GM12878 (cell line): ENCODE measurements at regions of chr3 and their contacts with region 1.

Region 1: DNA sequence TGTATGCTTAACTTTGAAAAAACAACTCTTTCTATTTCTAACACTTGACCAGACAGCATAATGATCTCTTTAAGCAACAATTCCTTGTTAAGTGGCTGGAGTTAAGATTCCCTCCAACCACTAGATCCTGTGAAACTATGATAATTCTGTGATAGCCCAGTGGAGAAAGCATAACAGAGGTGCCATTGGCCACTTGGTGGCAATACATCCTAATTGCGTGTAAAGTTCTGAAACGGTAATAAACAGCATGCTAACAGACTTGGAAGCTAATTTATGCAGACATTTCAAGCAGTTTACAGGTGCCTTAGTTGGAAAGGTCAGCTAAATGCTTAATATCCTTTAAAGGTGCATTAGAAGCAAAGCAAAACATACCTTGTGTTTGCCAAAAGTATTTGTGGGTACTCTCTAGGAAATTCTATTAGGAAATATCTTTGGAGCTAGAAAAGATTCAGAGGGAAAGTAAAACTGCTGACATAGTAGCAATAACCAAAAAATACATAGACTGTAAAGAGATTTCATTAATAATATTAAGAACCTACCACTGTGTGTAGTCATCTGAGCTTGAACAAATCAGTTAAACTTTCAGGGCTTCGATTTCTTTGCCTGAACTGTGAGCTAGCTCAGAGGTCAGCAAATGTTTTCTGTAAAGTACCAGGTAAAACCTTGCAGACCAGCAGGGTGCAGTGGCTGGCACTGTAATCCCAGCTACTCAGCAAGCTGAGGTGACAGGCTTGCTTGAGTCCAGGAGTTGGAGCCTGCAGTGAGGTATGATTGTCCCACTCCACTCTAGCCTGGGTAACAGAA is 19.0 kb upstream of the CSTA start:
- DNase-seq: no peak
- ATAC-seq: peak; percentile 93
- H3K4me3 ChIP-seq: no peak overlapping the region
- H3K27ac ChIP-seq: no peak overlapping the region
- H3K4me1 ChIP-seq: peaks cover 30% of the 10 kb centered on the region
- H3K27me3 ChIP-seq: no peaks in the 10 kb centered on the region
- CTCF ChIP-seq: peak; percentile 30 to 57 (median 35); a peak in 4 of 6 replicates
- EP300 ChIP-seq: no peak
- POLR2A ChIP-seq: no peak
- RAD21 ChIP-seq: peak; percentile 62

Region 2: DNA sequence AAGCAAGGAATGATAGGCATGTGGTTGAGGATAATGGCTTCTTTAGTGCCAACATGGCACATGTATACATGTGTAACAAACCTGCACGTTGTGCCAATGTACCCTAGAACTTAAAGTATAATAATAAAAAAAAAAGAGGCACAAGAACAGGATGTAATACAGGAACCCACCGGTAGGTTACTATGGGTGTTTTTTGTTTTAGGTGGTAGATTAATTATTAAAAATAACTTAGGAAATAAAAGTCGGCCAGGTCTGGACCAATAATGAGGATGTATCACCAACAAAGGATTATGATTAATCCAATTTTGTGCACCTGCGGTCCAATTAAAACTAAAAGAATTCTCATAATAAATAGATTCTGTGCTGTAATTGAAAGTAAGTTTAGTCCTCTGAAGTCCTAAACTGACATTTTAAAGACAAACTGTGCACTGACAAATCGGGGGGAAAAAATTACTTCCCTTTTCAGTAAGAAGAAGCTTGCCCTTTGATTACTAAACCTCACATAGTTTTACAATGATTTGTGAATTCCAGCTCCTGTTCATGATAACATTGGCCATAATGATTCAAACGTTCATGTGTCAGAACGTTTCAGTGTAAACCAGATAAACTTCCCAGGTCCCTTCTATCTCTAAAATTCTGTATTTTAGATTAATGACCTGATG is 60.4 kb before region 1 on chr3:
- CTCF ChIA-PET with region 1: interaction called, 4 read pairs
- POLR2A ChIA-PET with region 1: interaction called, 3 read pairs
- RAD21 ChIA-PET with region 1: no interaction called
- SMC1A ChIA-PET with region 1: interaction called, 19 read pairs
- in situ Hi-C with region 1: no loop called
- intact Hi-C with region 1: no loop called
- DNase-seq: no peak
- ATAC-seq: peak; percentile 51
- H3K4me3 ChIP-seq: peak overlapping the region; percentile 66
- H3K27ac ChIP-seq: peak overlapping the region; percentile 63
- H3K4me1 ChIP-seq: peaks cover 14% of the 10 kb centered on the region
- H3K27me3 ChIP-seq: no peaks in the 10 kb centered on the region
- CTCF ChIP-seq: peak in 2 of 3 experiments; percentile 23 to 28; a peak in 2 of 6 replicates
- EP300 ChIP-seq: no peak
- POLR2A ChIP-seq: no peak
- RAD21 ChIP-seq: no peak

Region 3: GRCh38 chr3:122283796-122284445 is 22.1 kb before region 1 on chr3:
- CTCF ChIA-PET with region 1: interaction called, 15 read pairs
- POLR2A ChIA-PET with region 1: interaction called, 4 read pairs
- RAD21 ChIA-PET with region 1: no interaction called
- SMC1A ChIA-PET with region 1: interaction called, 5 read pairs
- in situ Hi-C with region 1: no loop called
- intact Hi-C with region 1: no loop called
- DNase-seq: no peak
- ATAC-seq: no peak
- H3K4me3 ChIP-seq: no peak overlapping the region
- H3K27ac ChIP-seq: no peak overlapping the region
- H3K4me1 ChIP-seq: no peaks in the 10 kb centered on the region; the same call in 1 of the 2 replicates
- H3K27me3 ChIP-seq: no peaks in the 10 kb centered on the region
- CTCF ChIP-seq: no peak
- EP300 ChIP-seq: no peak
- POLR2A ChIP-seq: no peak
- RAD21 ChIP-seq: no peak

Region 4: DNA sequence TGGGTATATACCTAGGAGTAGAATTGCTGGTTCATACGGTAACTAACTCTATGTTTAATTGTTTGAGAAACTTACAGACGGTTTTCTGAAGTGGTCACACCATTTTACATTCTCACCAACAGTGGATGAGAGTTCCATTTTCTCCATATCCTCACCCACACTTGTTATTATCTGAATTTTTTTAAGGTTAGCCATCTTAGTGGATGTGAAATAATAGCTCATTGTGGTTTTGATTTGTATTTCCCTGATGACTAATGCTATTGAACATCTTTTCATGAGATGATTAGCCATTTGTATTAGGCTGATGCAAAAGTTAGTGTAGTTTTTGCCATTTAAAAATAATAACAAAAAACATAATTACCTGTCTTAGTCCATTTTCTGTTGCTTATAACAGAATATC is 37.6 kb after region 1 on chr3:
- CTCF ChIA-PET with region 1: interaction called, 38 read pairs
- POLR2A ChIA-PET with region 1: interaction called, 5 read pairs
- RAD21 ChIA-PET with region 1: interaction called, 14 read pairs
- SMC1A ChIA-PET with region 1: interaction called, 18 read pairs
- in situ Hi-C with region 1: no loop called
- intact Hi-C with region 1: no loop called
- DNase-seq: no peak
- ATAC-seq: no peak
- H3K4me3 ChIP-seq: no peak overlapping the region
- H3K27ac ChIP-seq: no peak overlapping the region
- H3K4me1 ChIP-seq: no peaks in the 10 kb centered on the region
- H3K27me3 ChIP-seq: no peaks in the 10 kb centered on the region
- CTCF ChIP-seq: no peak
- EP300 ChIP-seq: no peak
- POLR2A ChIP-seq: no peak
- RAD21 ChIP-seq: no peak

Region 5: DNA sequence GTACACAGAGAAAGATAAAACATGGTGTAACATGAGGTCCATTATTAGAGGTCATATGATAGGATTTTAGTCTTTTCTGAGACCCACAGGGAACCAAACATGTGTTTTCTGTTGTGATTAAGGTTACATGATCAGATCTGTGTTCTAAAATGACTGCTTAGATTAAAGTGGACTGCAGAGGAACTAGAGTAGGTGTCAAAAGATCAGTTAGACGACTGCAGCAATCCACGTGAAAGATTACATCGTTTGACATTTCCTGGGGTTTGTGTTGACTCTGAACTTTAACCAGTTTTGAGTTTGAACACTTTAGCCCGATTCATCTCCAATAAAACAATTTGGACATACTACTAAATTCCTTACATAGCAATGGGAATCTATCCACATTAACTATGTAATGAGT is 72.0 kb after region 1 on chr3:
- CTCF ChIA-PET with region 1: interaction called, 24 read pairs
- POLR2A ChIA-PET with region 1: interaction called, 14 read pairs
- RAD21 ChIA-PET with region 1: interaction called, 56 read pairs
- SMC1A ChIA-PET with region 1: interaction called, 59 read pairs
- in situ Hi-C with region 1: no loop called
- intact Hi-C with region 1: loop called (anchors 5 kb)
- DNase-seq: no peak
- ATAC-seq: no peak
- H3K4me3 ChIP-seq: no peak overlapping the region
- H3K27ac ChIP-seq: no peak overlapping the region
- H3K4me1 ChIP-seq: peaks cover 11% of the 10 kb centered on the region
- H3K27me3 ChIP-seq: no peaks in the 10 kb centered on the region
- CTCF ChIP-seq: no peak
- EP300 ChIP-seq: no peak
- POLR2A ChIP-seq: no peak
- RAD21 ChIP-seq: no peak

Region 6: GRCh38 chr3:122415720-122416654 is 110.0 kb after region 1 on chr3 and contains the start of gene WDR5B:
- CTCF ChIA-PET with region 1: interaction called, 18 read pairs
- POLR2A ChIA-PET with region 1: no interaction called
- RAD21 ChIA-PET with region 1: interaction called, 15 read pairs
- SMC1A ChIA-PET with region 1: interaction called, 18 read pairs
- in situ Hi-C with region 1: no loop called
- intact Hi-C with region 1: no loop called
- DNase-seq: peak; percentile 98
- ATAC-seq: peak; percentile 95
- H3K4me3 ChIP-seq: peak within 1 kb of the TSS; percentile 77
- H3K27ac ChIP-seq: peak within 1 kb of the TSS; percentile 91
- H3K4me1 ChIP-seq: peaks cover 14% of the 10 kb centered on the region; the same call in 1 of the 2 replicates
- H3K27me3 ChIP-seq: no peaks in the 10 kb centered on the region
- CTCF ChIP-seq: no peak; a peak in 1 of 6 replicates
- EP300 ChIP-seq: peak; percentile 33 to 43; a peak in 1 of 4 replicates
- POLR2A ChIP-seq: peak; percentile 93
- RAD21 ChIP-seq: no peak
- polyA plus RNA-seq, gene WDR5B: 1.7 to 2.4 TPM